ENCODE measurements at regions of chrX and their contacts with region 1.

Region 1: DNA sequence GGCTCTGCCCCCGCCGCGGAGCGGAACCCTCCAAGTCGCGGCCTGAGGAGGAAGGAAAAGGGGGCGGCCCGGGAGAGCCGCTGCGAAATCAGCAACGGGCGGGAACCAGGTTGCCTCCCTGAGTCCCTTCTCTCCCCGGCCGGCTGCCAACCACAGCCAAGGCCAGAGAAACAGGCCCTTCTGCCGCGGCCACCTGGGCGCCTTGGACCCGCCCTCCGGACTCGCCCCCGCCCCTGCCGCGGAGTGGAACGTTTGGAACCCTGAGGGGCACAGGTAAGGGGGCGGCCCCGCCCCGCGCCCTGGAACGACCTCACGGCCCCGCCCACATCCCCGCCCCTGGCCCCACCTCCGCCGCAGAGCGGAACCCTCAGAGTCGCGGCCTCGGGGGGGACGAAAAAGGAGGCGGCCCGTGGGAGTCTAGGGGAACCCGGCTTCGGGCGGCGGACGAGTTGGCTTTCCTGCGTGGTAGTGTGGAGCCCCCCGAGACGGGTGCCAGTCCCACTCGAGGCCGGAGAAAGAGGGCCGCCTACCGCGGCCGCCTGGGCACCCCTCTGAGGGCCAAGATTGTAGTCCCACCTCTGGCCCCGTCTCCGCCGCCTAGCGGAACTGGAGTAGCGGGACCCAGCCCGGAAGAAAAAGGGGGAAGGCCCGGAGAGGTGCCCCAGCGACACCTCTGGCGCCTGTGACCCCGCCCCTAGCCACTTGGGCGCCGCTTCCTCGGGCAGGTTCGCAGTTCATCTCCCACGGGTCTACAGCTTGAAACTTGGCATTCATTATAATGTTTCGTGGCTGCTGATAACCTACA is 669 bp upstream of the PHKA2 start:
- DNase-seq: peak; percentile 81 to 90
- ATAC-seq: peak; percentile 94 to 98 (median 94)
- H3K4me3 ChIP-seq: peak overlapping the region; percentile 82
- H3K27ac ChIP-seq: peak overlapping the region; percentile 84
- H3K4me1 ChIP-seq: peaks cover 3% of the 10 kb centered on the region
- H3K27me3 ChIP-seq: peaks cover 0 to 5% (median 0%) of the 10 kb centered on the region in 3 donors
- CTCF ChIP-seq: peak; percentile 45

Region 2: DNA sequence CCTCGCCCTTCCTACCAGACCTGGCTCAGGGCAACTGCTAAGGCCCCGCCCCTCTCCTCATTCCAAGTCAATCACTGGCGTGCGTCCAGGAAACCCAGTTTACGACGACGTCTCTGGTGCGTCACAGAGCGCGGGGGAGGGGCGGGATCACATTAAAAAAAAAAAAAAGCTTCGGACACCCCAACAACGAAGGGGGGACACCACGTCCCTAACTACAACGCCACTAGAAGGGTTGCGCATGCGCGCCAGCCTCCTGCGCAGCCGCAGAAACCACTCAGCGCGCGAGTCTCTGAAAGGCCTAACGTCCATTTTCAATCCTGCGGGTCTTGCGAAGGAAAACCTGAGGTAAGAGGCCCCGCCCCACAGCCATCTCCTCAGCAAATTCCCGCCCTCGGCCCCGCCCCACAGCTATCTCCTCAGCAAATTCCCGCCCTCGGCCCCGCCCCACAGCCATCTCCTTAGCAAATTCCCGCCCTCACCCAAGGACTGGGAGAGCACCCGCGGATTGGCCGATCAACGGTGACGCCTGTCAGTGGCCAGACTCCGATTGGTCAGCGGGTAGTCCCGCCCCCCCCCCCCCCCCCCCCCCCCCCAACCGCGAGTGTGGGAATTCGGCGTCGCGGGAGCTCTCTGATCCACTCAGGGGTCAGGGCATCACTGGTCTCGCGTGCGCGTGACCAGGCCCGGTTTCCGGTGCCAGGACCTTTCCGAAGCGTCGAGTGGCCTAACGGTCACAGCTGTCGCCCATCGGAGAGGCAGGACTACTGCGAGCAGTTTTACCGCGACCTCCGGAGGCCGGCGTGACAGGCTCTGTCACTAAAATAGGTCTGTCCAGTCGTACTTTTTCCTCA is 1247.5 kb before region 1 on chrX and contains the start of gene SCML1:
- intact Hi-C with region 1: loop called in 1 of 2 experiments (anchors 10 kb)
- DNase-seq: peak; percentile 96 to 98
- ATAC-seq: peak; percentile 93 to 97 (median 95)
- H3K4me3 ChIP-seq: peak within 1 kb of the TSS; percentile 68
- H3K27ac ChIP-seq: peak within 1 kb of the TSS; percentile 84
- H3K4me1 ChIP-seq: peaks cover 6% of the 10 kb centered on the region
- H3K27me3 ChIP-seq: peaks cover 0 to 3% (median 0%) of the 10 kb centered on the region in 3 donors
- CTCF ChIP-seq: no peak
- total RNA-seq, gene SCML1: 7.4 to 13.5 (median 9.5) TPM

Region 3: GRCh38 chrX:18582910-18583493 is 401.6 kb before region 1 on chrX:
- intact Hi-C with region 1: no loop called
- DNase-seq: no peak
- ATAC-seq: no peak
- H3K4me3 ChIP-seq: no peak overlapping the region
- H3K27ac ChIP-seq: no peak overlapping the region
- H3K4me1 ChIP-seq: no peaks in the 10 kb centered on the region
- H3K27me3 ChIP-seq: no peaks in the 10 kb centered on the region
- CTCF ChIP-seq: no peak

Region 4: GRCh38 chrX:18733287-18733686 is 251.3 kb before region 1 on chrX:
- intact Hi-C with region 1: no loop called
- DNase-seq: no peak
- ATAC-seq: no peak
- H3K4me3 ChIP-seq: no peak overlapping the region
- H3K27ac ChIP-seq: no peak overlapping the region
- H3K4me1 ChIP-seq: no peaks in the 10 kb centered on the region
- H3K27me3 ChIP-seq: no peaks in the 10 kb centered on the region
- CTCF ChIP-seq: no peak